SK-N-SH (cell line): ENCODE measurements at regions of chr6 and their contacts with region 1.

Region 1: DNA sequence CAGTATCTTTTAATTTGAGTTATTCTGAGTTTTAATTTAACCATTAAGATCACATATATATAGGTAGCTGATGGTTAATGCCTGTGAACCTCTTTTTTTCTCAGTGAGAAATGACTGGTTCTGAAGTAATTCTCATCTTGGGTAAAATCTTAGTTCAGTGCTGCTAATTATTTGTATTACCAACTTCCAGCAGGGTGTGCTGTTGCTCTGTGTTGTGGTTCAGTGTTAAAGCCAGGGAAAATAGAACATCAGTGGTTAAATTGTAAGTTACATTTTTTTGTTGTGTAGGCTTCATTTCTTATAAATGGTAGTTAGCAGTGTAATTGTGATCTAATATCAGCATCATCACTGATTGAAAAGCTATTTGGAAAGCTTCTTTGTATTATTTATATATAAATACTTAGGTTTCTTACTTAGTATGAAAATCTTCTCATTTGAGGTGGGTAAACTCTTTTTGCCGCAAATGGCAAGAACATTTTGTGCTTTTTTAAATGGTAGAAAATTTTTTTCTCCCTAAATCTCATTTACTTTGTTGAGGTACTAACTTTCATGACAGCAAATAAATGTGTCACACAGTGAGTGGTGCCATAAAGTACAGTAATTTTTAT is 43.7 kb downstream of the CDC5L start:
- DNase-seq: peak; percentile 38
- H3K4me3 ChIP-seq: no peak overlapping the region; a peak in 1 of 4 replicates
- H3K27ac ChIP-seq: no peak overlapping the region
- H3K4me1 ChIP-seq: peaks cover 3 to 6% of the 10 kb centered on the region in 2 experiments; a peak in 3 of 4 replicates
- H3K27me3 ChIP-seq: no peaks in the 10 kb centered on the region
- CTCF ChIP-seq: peak; percentile 84
- EP300 ChIP-seq: no peak
- RAD21 ChIP-seq: peak; percentile 86

Region 2: DNA sequence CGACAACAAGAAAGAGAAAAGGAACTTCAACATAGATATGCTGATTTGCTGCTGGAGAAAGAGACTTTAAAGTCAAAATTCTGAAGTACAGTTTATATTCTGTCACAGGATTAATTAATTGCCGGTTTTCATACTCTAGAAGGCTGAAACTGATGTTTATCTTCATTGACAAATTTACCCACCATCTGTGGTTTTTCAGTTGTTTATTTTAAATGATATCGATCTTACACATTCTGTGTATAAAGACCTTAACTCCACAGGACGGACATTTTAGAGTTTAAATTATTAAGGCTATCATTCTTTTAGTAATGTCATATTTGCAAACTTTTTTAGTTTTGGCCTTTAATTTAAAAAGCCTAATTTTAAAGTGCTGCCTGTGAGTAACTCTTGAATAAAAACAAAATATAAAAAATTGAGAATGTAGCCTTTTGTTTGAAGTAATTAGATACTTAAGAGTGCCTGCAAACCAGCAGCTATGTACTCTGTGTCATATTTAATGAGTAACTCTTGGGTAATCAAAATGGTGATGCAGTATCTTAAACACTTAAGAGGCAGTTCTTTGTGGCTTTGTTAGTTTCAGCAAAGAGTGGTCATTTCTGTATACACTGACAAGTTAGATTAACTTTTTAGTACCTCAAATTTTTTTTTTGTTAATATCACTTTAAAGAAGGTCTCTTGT is 15.5 kb after region 1 on chr6:
- CTCF ChIA-PET with region 1: interaction called, 34 read pairs
- POLR2A ChIA-PET with region 1: no interaction called
- DNase-seq: no peak
- H3K4me3 ChIP-seq: no peak overlapping the region
- H3K27ac ChIP-seq: peak overlapping the region; percentile 28 to 53; a peak in 3 of 4 replicates
- H3K4me1 ChIP-seq: peaks cover 8 to 18% of the 10 kb centered on the region in 2 experiments
- H3K27me3 ChIP-seq: no peaks in the 10 kb centered on the region
- CTCF ChIP-seq: no peak
- EP300 ChIP-seq: 0 out of 4 replicates have a peak, but pooled peaks of 1 of the 2 experiments have one; percentile 8
- RAD21 ChIP-seq: no peak

Region 3: DNA sequence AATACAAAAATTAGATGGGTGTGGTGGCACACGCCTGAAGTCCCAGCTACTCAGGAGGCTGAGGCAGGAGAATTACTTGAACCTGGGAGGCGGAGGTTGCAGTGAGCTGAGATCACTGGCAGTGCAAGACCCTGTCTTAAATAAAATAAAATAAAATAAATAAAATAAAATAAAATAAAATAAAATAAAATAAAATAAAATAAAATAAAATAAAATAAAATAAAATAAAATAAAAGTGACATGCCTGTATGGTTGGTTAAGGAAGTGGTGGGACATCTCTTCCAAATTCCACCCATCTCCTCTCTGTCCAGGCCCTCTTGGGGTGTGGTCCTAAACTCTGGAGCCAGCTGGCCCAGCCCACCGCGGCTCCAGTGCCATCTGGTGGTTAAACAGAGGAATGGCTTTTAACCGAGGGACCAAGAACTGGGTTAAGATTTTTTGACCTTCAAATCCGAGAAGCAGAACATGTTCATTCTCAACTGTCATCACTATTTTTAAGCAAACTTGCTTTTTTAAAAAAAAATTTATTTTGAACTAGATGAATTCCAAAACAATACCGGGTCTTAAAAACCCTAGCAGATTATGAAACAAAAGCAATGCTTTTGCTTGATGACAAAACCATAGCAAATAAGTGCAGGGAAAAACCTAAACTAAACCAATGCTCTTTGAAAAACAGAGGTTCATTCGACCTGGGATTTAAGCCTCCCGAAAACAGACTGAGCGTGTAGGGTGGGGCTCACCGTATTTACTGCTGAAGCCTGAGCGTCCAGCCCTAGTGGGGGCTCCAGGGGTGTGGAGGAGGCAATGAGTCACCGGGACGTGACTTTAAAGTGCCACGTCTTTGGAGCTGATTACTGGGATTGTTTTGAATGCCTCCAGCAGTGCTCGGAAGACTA is 25.1 kb after region 1 on chr6:
- CTCF ChIA-PET with region 1: interaction called, 154 read pairs
- POLR2A ChIA-PET with region 1: no interaction called
- DNase-seq: peak; percentile 79
- H3K4me3 ChIP-seq: peak overlapping the region in 1 of 2 experiments; percentile 51; a peak in 1 of 4 replicates
- H3K27ac ChIP-seq: no peak overlapping the region
- H3K4me1 ChIP-seq: peaks cover 0 to 4% of the 10 kb centered on the region in 2 experiments; a peak in 2 of 4 replicates
- H3K27me3 ChIP-seq: no peaks in the 10 kb centered on the region
- CTCF ChIP-seq: peak; percentile 86
- EP300 ChIP-seq: no peak
- RAD21 ChIP-seq: peak; percentile 80

Region 4: DNA sequence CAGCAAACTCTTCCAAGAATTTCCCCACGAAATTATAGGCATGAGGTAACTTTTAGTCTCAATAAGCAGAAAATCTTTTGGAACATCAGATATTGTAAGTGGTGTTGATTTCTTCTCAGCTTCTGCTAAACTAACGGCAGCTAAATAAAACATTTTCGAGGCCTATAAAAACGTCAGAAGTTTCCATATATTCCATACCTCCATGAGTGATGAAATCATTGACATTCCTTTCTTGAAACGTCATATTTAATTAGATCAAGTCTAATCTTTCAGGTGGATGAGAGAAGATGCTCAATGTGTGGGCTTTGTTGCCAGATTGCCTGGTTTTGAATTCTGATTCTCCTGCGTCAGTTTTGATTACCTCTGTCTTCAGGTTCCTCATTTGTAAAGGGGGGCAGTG is 37.6 kb after region 1 on chr6:
- CTCF ChIA-PET with region 1: interaction called, 154 read pairs
- POLR2A ChIA-PET with region 1: no interaction called
- DNase-seq: no peak
- H3K4me3 ChIP-seq: no peak overlapping the region
- H3K27ac ChIP-seq: no peak overlapping the region
- H3K4me1 ChIP-seq: no peaks in the 10 kb centered on the region; a peak in 1 of 4 replicates
- H3K27me3 ChIP-seq: no peaks in the 10 kb centered on the region
- CTCF ChIP-seq: no peak
- EP300 ChIP-seq: no peak
- RAD21 ChIP-seq: no peak